Endothelial cell of umbilical vein (primary cell): ENCODE measurements at regions of chr1 and their contacts with region 1.

Region 1: GRCh38 chr1:27858072-27858958 is 14.0 kb upstream of the THEMIS2 start:
- DNase-seq: peak; percentile 81
- H3K4me3 ChIP-seq: no peak overlapping the region
- H3K27ac ChIP-seq: no peak overlapping the region
- H3K4me1 ChIP-seq: peaks cover under 1% of the 10 kb centered on the region
- H3K27me3 ChIP-seq: no peaks in the 10 kb centered on the region
- CTCF ChIP-seq: peak; percentile 93 to 97
- POLR2A ChIP-seq: no peak

Region 2: GRCh38 chr1:27741121-27741520 is 117.2 kb before region 1 on chr1:
- CTCF ChIA-PET with region 1: no interaction called
- POLR2A ChIA-PET with region 1: no interaction called
- dilution Hi-C with region 1: no loop called
- intact Hi-C with region 1: no loop called
- DNase-seq: no peak
- H3K4me3 ChIP-seq: no peak overlapping the region
- H3K27ac ChIP-seq: no peak overlapping the region
- H3K4me1 ChIP-seq: no peaks in the 10 kb centered on the region
- H3K27me3 ChIP-seq: no peaks in the 10 kb centered on the region
- CTCF ChIP-seq: no peak
- POLR2A ChIP-seq: no peak

Region 3: DNA sequence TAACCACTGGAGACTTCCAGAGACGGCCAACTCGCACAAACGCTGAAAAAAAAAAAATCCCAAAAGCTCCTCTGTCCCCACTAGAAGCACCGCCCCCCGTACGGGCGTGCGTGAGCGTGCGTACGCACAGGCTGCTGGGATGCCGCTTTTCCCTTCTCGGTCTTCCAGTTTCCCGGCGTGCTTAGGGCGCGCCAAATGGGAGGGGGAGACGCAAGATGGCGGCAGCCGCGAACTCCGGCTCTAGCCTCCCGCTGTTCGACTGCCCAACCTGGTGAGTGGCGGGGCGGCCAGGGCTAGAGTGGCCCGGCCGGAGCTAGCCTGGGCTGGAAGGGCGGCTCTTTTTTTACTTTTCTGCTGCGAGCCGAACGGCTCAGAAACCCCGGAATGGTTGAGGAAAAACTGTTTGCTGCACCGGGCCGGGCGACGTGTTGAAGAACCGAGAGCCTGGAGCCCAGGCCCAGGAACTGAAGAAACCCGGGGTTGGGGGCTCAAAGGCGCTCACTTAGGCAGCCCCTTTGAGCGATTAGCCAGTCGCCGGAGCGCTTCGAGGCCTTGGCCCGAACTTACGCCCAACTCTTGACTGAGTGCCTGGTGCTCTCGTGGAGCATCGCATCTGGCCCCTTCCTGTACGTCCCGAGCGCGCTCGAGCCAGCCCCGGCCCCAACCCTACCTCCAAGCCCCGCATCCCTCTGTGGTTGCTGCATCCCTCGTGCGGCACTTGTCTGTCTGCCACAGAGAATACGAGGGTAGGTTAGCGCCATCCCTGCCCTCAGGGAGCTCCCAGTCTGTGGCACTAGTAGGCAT is 27.5 kb before region 1 on chr1 and contains the start of gene PPP1R8:
- CTCF ChIA-PET with region 1: interaction called, 10 read pairs
- POLR2A ChIA-PET with region 1: no interaction called
- dilution Hi-C with region 1: no loop called
- intact Hi-C with region 1: no loop called
- DNase-seq: peak; percentile 96
- H3K4me3 ChIP-seq: peak within 1 kb of the TSS; percentile 90 to 93 (median 92)
- H3K27ac ChIP-seq: peak within 1 kb of the TSS; percentile 86
- H3K4me1 ChIP-seq: peaks cover 19% of the 10 kb centered on the region
- H3K27me3 ChIP-seq: no peaks in the 10 kb centered on the region
- CTCF ChIP-seq: no peak
- POLR2A ChIP-seq: peak; percentile 97
- total RNA-seq, gene PPP1R8: 45.4 and 48.5 TPM in 2 replicates

Region 4: GRCh38 chr1:27940297-27940696 is 82.0 kb after region 1 on chr1:
- CTCF ChIA-PET with region 1: interaction called, 14 read pairs
- POLR2A ChIA-PET with region 1: no interaction called
- dilution Hi-C with region 1: no loop called
- intact Hi-C with region 1: no loop called
- DNase-seq: peak; percentile 44
- H3K4me3 ChIP-seq: no peak overlapping the region
- H3K27ac ChIP-seq: no peak overlapping the region
- H3K4me1 ChIP-seq: peaks cover 7% of the 10 kb centered on the region
- H3K27me3 ChIP-seq: peaks cover 0 to 5% of the 10 kb centered on the region in 2 experiments
- CTCF ChIP-seq: peak; percentile 34 to 44
- POLR2A ChIP-seq: no peak

Region 5: DNA sequence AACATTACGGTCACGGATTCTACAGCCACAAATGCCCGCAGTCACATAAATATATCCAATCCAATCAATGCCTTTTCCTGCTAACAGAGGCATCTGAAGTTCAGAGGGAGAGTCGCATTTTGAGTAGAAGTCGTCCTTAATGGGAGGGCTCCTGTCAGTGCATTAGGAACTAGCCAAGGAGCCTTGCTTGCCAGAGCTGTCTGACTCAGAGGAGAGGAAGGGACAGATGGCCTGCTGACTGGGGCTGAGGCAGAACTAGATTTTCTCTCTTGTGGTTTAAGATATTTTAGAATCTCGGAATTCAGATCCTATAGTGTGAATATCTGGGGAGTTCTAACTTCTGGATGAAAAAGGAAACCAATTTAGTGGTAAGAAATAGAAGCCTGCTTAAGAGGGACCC is 112.1 kb after region 1 on chr1:
- CTCF ChIA-PET with region 1: interaction called, 13 read pairs
- POLR2A ChIA-PET with region 1: no interaction called
- dilution Hi-C with region 1: no loop called
- intact Hi-C with region 1: no loop called
- DNase-seq: no peak
- H3K4me3 ChIP-seq: no peak overlapping the region
- H3K27ac ChIP-seq: no peak overlapping the region
- H3K4me1 ChIP-seq: no peaks in the 10 kb centered on the region
- H3K27me3 ChIP-seq: no peaks in the 10 kb centered on the region
- CTCF ChIP-seq: no peak
- POLR2A ChIP-seq: no peak

Region 6: GRCh38 chr1:27992276-27992675 is 134.0 kb after region 1 on chr1:
- CTCF ChIA-PET with region 1: interaction called, 11 read pairs
- POLR2A ChIA-PET with region 1: no interaction called
- dilution Hi-C with region 1: no loop called
- intact Hi-C with region 1: no loop called
- DNase-seq: peak; percentile 60
- H3K4me3 ChIP-seq: no peak overlapping the region
- H3K27ac ChIP-seq: peak overlapping the region; percentile 46
- H3K4me1 ChIP-seq: peaks cover 35% of the 10 kb centered on the region
- H3K27me3 ChIP-seq: no peaks in the 10 kb centered on the region
- CTCF ChIP-seq: no peak
- POLR2A ChIP-seq: no peak